HepG2 (cell line): ENCODE measurements at regions of chr10 and their contacts with region 1.

Region 1: GRCh38 chr10:98309366-98310355 is 41.7 kb upstream of the LOXL4 start:
- DNase-seq: peak; percentile 46
- ATAC-seq: peak; percentile 97
- H3K4me3 ChIP-seq: no peak overlapping the region; a peak in 1 of 6 replicates
- H3K27ac ChIP-seq: no peak overlapping the region
- H3K4me1 ChIP-seq: peaks cover 13% of the 10 kb centered on the region
- H3K27me3 ChIP-seq: peaks cover 2 to 38% of the 10 kb centered on the region in 2 experiments; a peak in 4 of 5 replicates
- CTCF ChIP-seq: peak; percentile 96
- EP300 ChIP-seq: no peak
- POLR2A ChIP-seq: no peak
- RAD21 ChIP-seq: peak; percentile 93

Region 2: DNA sequence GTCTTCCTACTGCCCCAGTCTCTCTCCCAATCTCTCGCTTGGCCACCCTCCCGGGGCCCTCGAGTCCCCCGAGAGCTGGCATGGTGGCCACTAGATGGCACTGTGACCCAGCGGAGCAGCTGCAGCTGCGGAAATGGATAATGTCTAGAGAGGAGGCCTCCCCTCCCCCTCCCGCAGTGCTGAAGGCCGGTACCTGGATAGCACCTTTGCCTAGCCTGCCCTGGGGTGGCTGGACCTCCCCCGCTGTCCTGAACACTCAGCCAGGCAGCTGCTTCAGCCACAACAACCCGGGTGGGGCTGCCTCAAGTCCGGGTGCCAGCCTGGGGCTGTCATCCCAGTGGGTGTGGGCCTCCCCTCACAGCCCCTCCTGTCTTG is 394.8 kb before region 1 on chr10:
- CTCF ChIA-PET with region 1: no interaction called
- POLR2A ChIA-PET with region 1: no interaction called
- in situ Hi-C with region 1: loop called (anchors 25 kb)
- intact Hi-C with region 1: no loop called
- DNase-seq: peak; percentile 29
- ATAC-seq: peak; percentile 95
- H3K4me3 ChIP-seq: no peak overlapping the region
- H3K27ac ChIP-seq: no peak overlapping the region
- H3K4me1 ChIP-seq: no peaks in the 10 kb centered on the region
- H3K27me3 ChIP-seq: peaks cover 4 to 19% of the 10 kb centered on the region in 2 experiments; a peak in 2 of 5 replicates
- CTCF ChIP-seq: peak; percentile 94
- EP300 ChIP-seq: no peak
- POLR2A ChIP-seq: no peak
- RAD21 ChIP-seq: peak; percentile 92

Region 3: GRCh38 chr10:98170249-98171117 is 139.2 kb before region 1 on chr10:
- CTCF ChIA-PET with region 1: interaction called, 30 read pairs
- POLR2A ChIA-PET with region 1: interaction called, 3 read pairs
- in situ Hi-C with region 1: loop called (anchors 5 kb)
- intact Hi-C with region 1: loop called (anchors 1 kb)
- DNase-seq: peak; percentile 54
- ATAC-seq: peak; percentile 97
- H3K4me3 ChIP-seq: no peak overlapping the region
- H3K27ac ChIP-seq: no peak overlapping the region
- H3K4me1 ChIP-seq: no peaks in the 10 kb centered on the region
- H3K27me3 ChIP-seq: no peaks in the 10 kb centered on the region
- CTCF ChIP-seq: peak; percentile 83
- EP300 ChIP-seq: no peak
- POLR2A ChIP-seq: no peak
- RAD21 ChIP-seq: peak; percentile 37; the same call in 1 of the 2 replicates

Region 4: GRCh38 chr10:98242823-98243222 is 66.8 kb before region 1 on chr10:
- CTCF ChIA-PET with region 1: interaction called, 23 read pairs
- POLR2A ChIA-PET with region 1: no interaction called
- in situ Hi-C with region 1: loop called (anchors 10 kb)
- intact Hi-C with region 1: loop called (anchors 1 kb)
- DNase-seq: no peak
- ATAC-seq: no peak
- H3K4me3 ChIP-seq: no peak overlapping the region
- H3K27ac ChIP-seq: no peak overlapping the region
- H3K4me1 ChIP-seq: no peaks in the 10 kb centered on the region
- H3K27me3 ChIP-seq: no peaks in the 10 kb centered on the region
- CTCF ChIP-seq: peak; percentile 60
- EP300 ChIP-seq: no peak
- POLR2A ChIP-seq: no peak
- RAD21 ChIP-seq: 0 out of 2 replicates have a peak, but pooled peaks have one; percentile 36

Region 5: GRCh38 chr10:98262571-98262970 is 47.1 kb before region 1 on chr10:
- CTCF ChIA-PET with region 1: interaction called, 35 read pairs
- POLR2A ChIA-PET with region 1: interaction called, 4 read pairs
- in situ Hi-C with region 1: loop called (anchors 5 kb)
- intact Hi-C with region 1: loop called (anchors 1 kb)
- DNase-seq: no peak
- ATAC-seq: peak; percentile 54
- H3K4me3 ChIP-seq: no peak overlapping the region
- H3K27ac ChIP-seq: no peak overlapping the region
- H3K4me1 ChIP-seq: peaks cover 51% of the 10 kb centered on the region
- H3K27me3 ChIP-seq: no peaks in the 10 kb centered on the region
- CTCF ChIP-seq: peak; percentile 87
- EP300 ChIP-seq: no peak
- POLR2A ChIP-seq: no peak
- RAD21 ChIP-seq: peak; percentile 85

Region 6: GRCh38 chr10:98269072-98269912 is 40.4 kb before region 1 on chr10:
- CTCF ChIA-PET with region 1: no interaction called
- POLR2A ChIA-PET with region 1: interaction called, 4 read pairs
- in situ Hi-C with region 1: loop called (anchors 5 kb)
- intact Hi-C with region 1: no loop called
- DNase-seq: peak; percentile 83
- ATAC-seq: peak; percentile 59
- H3K4me3 ChIP-seq: peak overlapping the region; percentile 69 to 80 (median 71)
- H3K27ac ChIP-seq: peak overlapping the region; percentile 60
- H3K4me1 ChIP-seq: peaks cover 91% of the 10 kb centered on the region
- H3K27me3 ChIP-seq: no peaks in the 10 kb centered on the region
- CTCF ChIP-seq: no peak
- EP300 ChIP-seq: peak in 1 of 2 experiments; percentile 5; a peak in 1 of 4 replicates
- POLR2A ChIP-seq: peak in 1 of 2 experiments; percentile 22; a peak in 1 of 4 replicates
- RAD21 ChIP-seq: no peak

Region 7: GRCh38 chr10:98425511-98426352 is 116.1 kb after region 1 on chr10:
- CTCF ChIA-PET with region 1: no interaction called
- POLR2A ChIA-PET with region 1: no interaction called
- in situ Hi-C with region 1: no loop called
- intact Hi-C with region 1: no loop called
- DNase-seq: peak; percentile 29
- ATAC-seq: peak; percentile 72
- H3K4me3 ChIP-seq: no peak overlapping the region
- H3K27ac ChIP-seq: no peak overlapping the region
- H3K4me1 ChIP-seq: peaks cover 10% of the 10 kb centered on the region
- H3K27me3 ChIP-seq: no peaks in the 10 kb centered on the region
- CTCF ChIP-seq: peak; percentile 75
- EP300 ChIP-seq: no peak
- POLR2A ChIP-seq: no peak
- RAD21 ChIP-seq: no peak